ENCODE measurements at regions of chr2 and their contacts with region 1.

Region 1: DNA sequence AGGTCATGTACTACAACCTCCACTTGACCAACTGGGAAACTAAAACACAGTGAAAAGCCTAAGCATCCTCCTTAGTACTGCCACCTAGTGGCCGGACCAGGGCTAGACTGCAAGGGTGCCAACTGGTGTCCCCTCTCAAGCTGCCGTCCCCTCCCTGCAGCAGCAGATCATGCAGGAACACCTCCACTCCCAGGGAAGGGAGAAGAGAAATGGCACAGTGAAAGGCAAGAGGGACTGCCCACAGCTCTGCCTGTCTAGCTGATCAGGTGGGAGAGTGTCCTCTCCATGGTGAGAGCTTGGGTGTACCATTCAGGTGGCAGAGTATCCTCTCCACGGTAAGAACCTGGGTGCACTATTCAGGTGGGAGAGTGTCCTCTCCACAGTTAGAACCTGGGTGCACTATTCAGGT is 78.1 kb downstream of the AAK1 start:
- DNase-seq: peak; percentile 84
- ATAC-seq: peak; percentile 71
- H3K4me3 Mint-ChIP-seq: no peak overlapping the region
- H3K27ac Mint-ChIP-seq: peak overlapping the region; percentile 59
- H3K4me1 Mint-ChIP-seq: peaks cover 85% of the 10 kb centered on the region
- H3K27me3 Mint-ChIP-seq: no peaks in the 10 kb centered on the region
- CTCF ChIP-seq: peak; percentile 85

Region 2: GRCh38 chr2:69453475-69454129 is 111.8 kb before region 1 on chr2:
- CTCF ChIA-PET with region 1: interaction called, 16 read pairs
- POLR2A ChIA-PET with region 1: no interaction called
- intact Hi-C with region 1: no loop called
- DNase-seq: peak; percentile 60
- ATAC-seq: peak; percentile 96
- H3K4me3 Mint-ChIP-seq: peak overlapping the region; percentile 18
- H3K27ac Mint-ChIP-seq: peak overlapping the region; percentile 81
- H3K4me1 Mint-ChIP-seq: peaks cover 38% of the 10 kb centered on the region
- H3K27me3 Mint-ChIP-seq: no peaks in the 10 kb centered on the region
- CTCF ChIP-seq: no peak

Region 3: GRCh38 chr2:69545477-69545932 is 19.9 kb before region 1 on chr2:
- CTCF ChIA-PET with region 1: interaction called, 66 read pairs
- POLR2A ChIA-PET with region 1: no interaction called
- intact Hi-C with region 1: no loop called
- DNase-seq: no peak
- ATAC-seq: no peak
- H3K4me3 Mint-ChIP-seq: no peak overlapping the region
- H3K27ac Mint-ChIP-seq: peak overlapping the region; percentile 1
- H3K4me1 Mint-ChIP-seq: peaks cover 40% of the 10 kb centered on the region
- H3K27me3 Mint-ChIP-seq: no peaks in the 10 kb centered on the region
- CTCF ChIP-seq: no peak

Region 4: DNA sequence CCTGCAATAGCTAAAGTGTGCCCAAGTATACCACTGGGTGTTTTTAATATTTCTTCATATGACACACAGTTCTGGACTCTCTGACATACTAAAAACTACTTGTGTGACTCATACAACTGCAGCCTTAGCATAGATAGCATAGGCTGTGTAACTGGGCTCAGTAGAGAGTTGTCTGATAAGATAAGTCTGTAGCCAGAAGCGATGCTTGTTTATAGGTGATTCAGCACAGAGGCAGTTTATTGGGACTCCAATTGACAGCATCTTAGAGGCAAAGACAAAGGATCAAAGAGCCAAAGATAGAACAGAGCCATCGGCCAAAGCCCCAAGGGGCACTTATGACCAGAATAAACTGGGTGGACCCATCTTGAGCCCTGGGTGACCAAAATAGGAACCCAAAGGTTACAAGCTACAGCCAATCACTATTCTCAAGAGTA is 35.8 kb after region 1 on chr2:
- CTCF ChIA-PET with region 1: interaction called, 31 read pairs
- POLR2A ChIA-PET with region 1: no interaction called
- intact Hi-C with region 1: no loop called
- DNase-seq: no peak
- ATAC-seq: peak; percentile 86
- H3K4me3 Mint-ChIP-seq: no peak overlapping the region
- H3K27ac Mint-ChIP-seq: peak overlapping the region; percentile 82
- H3K4me1 Mint-ChIP-seq: peaks cover 90% of the 10 kb centered on the region
- H3K27me3 Mint-ChIP-seq: no peaks in the 10 kb centered on the region
- CTCF ChIP-seq: no peak

Region 5: GRCh38 chr2:69643602-69644505 is 78.4 kb after region 1 on chr2 and contains the start of gene AAK1:
- CTCF ChIA-PET with region 1: interaction called, 145 read pairs
- POLR2A ChIA-PET with region 1: interaction called, 17 read pairs
- intact Hi-C with region 1: loop called (anchors 5 kb)
- DNase-seq: peak; percentile 91
- ATAC-seq: peak; percentile 58
- H3K4me3 Mint-ChIP-seq: peak within 1 kb of the TSS; percentile 85
- H3K27ac Mint-ChIP-seq: peak within 1 kb of the TSS; percentile 96
- H3K4me1 Mint-ChIP-seq: peaks cover 50% of the 10 kb centered on the region
- H3K27me3 Mint-ChIP-seq: no peaks in the 10 kb centered on the region
- CTCF ChIP-seq: no peak
- total RNA-seq, gene AAK1: 114 to 115 TPM

Region 6: DNA sequence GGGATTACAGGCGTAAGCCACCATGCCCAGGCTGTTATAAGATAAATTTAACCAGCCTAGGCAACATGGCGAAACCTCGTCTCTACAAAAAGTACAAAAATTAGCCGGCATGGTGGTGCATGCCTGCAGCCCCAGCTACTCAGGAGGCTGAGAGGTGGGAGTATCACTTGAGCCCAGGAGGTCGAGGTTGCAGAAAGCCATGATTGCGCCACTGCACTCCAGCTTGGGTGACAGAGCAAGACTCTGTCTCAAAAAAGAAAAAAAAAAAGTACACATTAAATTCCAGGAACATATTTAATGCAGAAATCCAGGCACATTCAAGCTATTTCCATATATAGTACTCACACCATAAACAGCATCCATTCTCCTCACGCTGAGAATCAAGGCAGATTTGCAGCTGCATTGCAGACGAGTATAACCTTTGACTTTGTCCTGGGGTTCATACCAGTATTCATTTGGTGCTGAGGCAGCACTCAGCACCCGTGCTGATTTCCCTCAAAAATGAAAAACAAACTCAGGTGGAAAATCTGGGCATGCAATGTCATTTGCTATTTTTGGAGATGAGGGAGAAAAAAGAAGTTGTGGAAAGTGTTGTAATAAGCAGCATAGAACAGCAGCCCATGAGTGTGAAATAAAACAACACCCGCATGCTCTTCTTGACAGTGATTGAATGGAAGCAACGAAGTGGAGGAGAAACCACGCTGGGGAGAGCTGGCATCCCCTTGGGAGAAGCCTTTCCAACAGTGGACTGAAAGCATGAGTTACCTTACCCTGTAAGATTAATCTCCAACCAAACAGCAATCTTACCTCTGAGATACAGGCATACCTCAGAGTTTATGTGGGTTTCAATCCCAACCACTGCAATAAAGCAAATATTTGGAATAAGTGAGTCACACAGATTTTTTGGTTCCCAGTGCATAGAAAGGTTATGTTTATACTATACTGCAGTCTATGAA is 129.7 kb after region 1 on chr2:
- CTCF ChIA-PET with region 1: interaction called, 37 read pairs
- POLR2A ChIA-PET with region 1: interaction called, 3 read pairs
- intact Hi-C with region 1: loop called (anchors 5 kb)
- DNase-seq: no peak
- ATAC-seq: peak; percentile 71
- H3K4me3 Mint-ChIP-seq: no peak overlapping the region
- H3K27ac Mint-ChIP-seq: peak overlapping the region; percentile 72
- H3K4me1 Mint-ChIP-seq: peaks cover 75% of the 10 kb centered on the region
- H3K27me3 Mint-ChIP-seq: no peaks in the 10 kb centered on the region
- CTCF ChIP-seq: no peak

Region 7: DNA sequence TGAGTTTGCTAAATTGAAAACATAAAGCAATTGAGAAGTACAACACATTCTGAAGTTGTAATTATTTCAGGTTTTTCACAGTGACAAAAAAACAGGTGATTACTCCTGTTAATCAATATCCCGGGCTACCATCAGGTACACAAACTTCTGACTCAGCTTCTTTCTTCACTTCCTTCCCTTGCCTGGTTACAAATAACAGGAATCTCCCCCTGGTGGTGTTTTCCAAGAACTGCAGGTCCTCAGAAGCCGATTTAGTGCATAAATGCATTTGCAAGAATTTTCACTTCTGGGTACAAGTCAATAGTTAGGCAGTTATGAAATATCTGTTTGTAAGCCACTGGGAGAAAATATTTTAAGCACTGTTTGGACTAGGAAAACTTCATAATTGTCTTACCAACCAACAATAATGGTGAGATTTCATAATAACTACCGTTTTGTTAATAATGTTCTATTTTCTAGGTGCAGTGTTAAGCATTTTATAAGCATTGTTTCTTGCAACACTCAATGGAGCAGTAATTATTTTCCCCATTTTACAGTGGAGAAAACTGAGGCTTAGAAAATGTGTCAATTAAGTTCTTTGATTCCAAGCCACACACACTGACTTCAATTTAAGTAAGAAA is 251.6 kb after region 1 on chr2:
- CTCF ChIA-PET with region 1: interaction called, 21 read pairs
- POLR2A ChIA-PET with region 1: no interaction called
- intact Hi-C with region 1: no loop called
- DNase-seq: peak; percentile 88
- ATAC-seq: peak; percentile 89
- H3K4me3 Mint-ChIP-seq: no peak overlapping the region
- H3K27ac Mint-ChIP-seq: no peak overlapping the region
- H3K4me1 Mint-ChIP-seq: peaks cover 4% of the 10 kb centered on the region
- H3K27me3 Mint-ChIP-seq: no peaks in the 10 kb centered on the region
- CTCF ChIP-seq: peak; percentile 94

Measured in activated CD8-positive, alpha-beta T cell treated with anti-CD3 and anti-CD28 coated beads for 36 hours (primary cell).